ENCODE measurements at regions of chr6 and their contacts with region 1.

Region 1: DNA sequence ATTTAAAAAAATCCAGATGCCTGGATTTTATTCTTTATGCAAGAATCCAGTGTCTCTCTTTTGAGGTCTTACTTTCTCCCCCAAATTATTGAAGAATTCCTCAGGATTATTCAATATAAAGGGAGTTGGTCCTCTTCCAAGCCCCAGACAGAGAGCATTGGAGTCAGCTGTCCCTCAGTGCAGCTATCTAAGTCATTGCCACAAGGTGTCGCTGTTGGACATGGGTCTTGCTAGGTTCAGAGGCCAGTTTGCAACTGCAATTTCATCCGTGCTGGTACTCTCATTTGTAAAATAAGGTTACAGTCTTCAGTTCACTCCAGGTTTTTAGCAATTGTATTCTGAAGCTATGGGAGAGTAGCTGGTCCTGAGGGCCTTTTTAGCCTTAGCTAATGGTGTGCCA is 27.8 kb downstream of the CCN2 start:
- DNase-seq: peak; percentile 67 to 78
- H3K4me3 ChIP-seq: no peak overlapping the region
- H3K27ac ChIP-seq: no peak overlapping the region
- H3K4me1 ChIP-seq: no peaks in the 10 kb centered on the region
- H3K27me3 ChIP-seq: no peaks in the 10 kb centered on the region
- CTCF ChIP-seq: peak in 5 of 7 experiments; percentile 30 to 55 (median 46)
- EP300 ChIP-seq: no peak
- POLR2A ChIP-seq: no peak

Region 2: DNA sequence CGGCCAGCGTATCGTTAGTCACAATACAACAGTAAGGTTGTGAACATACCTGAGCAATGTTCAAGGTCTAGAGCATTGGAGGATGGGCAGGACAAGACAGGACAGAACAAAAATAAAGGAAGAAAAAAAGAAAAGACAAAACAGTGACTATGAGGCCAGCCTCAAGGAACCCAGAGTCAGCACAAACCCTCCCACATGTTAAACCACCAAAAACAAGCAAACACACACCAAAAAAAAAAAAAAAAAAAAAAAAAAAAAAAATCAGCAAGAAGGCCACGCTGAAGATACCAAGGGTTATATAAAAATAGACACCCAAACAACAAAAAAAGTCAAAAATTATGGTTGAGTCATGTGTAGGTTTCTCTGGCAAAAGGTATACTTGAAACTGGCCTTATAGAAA is 308.1 kb before region 1 on chr6:
- intact Hi-C with region 1: no loop called
- DNase-seq: no peak
- H3K4me3 ChIP-seq: no peak overlapping the region
- H3K27ac ChIP-seq: no peak overlapping the region
- H3K4me1 ChIP-seq: no peaks in the 10 kb centered on the region
- H3K27me3 ChIP-seq: no peaks in the 10 kb centered on the region
- CTCF ChIP-seq: no peak
- EP300 ChIP-seq: no peak
- POLR2A ChIP-seq: no peak

Region 3: GRCh38 chr6:131773284-131773950 is 149.9 kb before region 1 on chr6:
- intact Hi-C with region 1: no loop called
- DNase-seq: peak in 1 of 2 donors; percentile 45
- H3K4me3 ChIP-seq: no peak overlapping the region
- H3K27ac ChIP-seq: no peak overlapping the region
- H3K4me1 ChIP-seq: peaks cover 0 to 4% (median 0%) of the 10 kb centered on the region in 4 donors
- H3K27me3 ChIP-seq: no peaks in the 10 kb centered on the region
- CTCF ChIP-seq: no peak
- EP300 ChIP-seq: no peak
- POLR2A ChIP-seq: no peak

Region 4: DNA sequence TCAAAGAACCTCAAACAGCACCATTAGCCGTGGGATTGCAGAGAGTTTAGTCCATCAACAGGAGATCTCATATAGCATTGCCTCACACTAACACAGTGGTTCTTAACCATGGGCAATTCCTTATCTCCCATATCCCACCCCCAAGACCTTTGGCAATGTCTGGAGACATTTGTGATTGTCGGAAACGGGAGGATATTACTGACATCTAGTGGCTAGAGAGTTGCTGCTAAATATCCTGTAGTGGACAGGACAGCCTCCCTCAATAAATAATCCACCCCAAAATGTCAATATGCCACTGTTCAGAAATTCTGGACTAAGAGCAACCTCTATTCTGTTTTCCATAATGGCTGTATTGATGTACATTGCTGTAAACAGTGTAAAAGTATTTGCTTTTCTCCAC is 237.9 kb after region 1 on chr6:
- intact Hi-C with region 1: loop called (anchors 10 kb)
- DNase-seq: peak in 1 of 2 donors; percentile 53
- H3K4me3 ChIP-seq: no peak overlapping the region
- H3K27ac ChIP-seq: no peak overlapping the region
- H3K4me1 ChIP-seq: peaks cover 0 to 3% (median 0%) of the 10 kb centered on the region in 4 donors
- H3K27me3 ChIP-seq: no peaks in the 10 kb centered on the region
- CTCF ChIP-seq: peak in 5 of 7 experiments; percentile 27 to 49 (median 38)
- EP300 ChIP-seq: no peak
- POLR2A ChIP-seq: no peak

Measured in stomach (tissue), 19 donors.